Caco-2 (cell line): ENCODE measurements at regions of chr17 and their contacts with region 1.

Region 1: DNA sequence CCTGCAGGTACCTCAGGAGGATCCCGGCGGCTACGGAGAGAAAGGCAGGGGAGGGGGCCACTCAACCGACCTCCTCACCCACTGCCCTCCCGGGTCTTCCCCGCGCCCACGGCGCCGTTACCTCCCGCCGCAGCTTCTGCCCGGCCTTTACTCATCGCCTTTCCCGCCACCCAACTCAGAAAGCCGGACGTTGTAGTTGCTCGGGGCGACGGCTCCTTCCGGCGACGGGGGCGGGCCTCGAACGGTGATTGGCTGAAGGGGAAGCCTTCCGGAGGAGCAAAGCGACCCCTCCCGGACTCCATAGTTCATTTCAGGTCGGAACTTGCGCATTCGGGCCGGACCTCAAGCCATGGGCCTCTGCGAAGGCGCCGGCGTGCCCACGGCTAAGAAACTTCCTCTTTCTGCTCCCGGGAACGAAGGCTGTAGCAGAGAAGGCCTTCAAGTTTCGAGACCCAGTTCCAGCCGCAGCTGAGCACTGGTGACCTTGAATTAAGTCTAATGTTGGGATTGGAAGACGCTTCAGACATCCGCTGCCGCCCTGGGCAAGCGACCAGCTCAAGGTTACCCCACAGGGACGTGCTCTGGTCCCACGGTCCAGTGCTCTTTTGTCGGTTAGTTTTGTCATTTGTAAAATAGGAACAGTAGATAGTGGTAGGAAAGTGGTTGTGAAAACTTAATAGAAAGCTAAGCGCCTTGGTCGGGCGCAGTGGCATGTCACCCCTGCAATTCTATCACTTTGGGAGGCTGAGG is at the start of gene PSMC3IP:
- DNase-seq: peak; percentile 95 to 97
- H3K4me3 ChIP-seq: peak within 1 kb of the TSS; percentile 82
- H3K4me3 Mint-ChIP-seq: peak within 1 kb of the TSS; percentile 80
- H3K27ac Mint-ChIP-seq: peak within 1 kb of the TSS; percentile 84
- H3K4me1 ChIP-seq: peaks cover 4% of the 10 kb centered on the region
- H3K4me1 Mint-ChIP-seq: peaks cover 23% of the 10 kb centered on the region
- H3K27me3 ChIP-seq: no peaks in the 10 kb centered on the region
- H3K27me3 Mint-ChIP-seq: no peaks in the 10 kb centered on the region
- CTCF ChIP-seq: peak; percentile 59 to 64
- total RNA-seq, gene PSMC3IP: 24.7 and 25.2 TPM in 2 replicates

Region 2: GRCh38 chr17:42536048-42536371 is 41.7 kb before region 1 on chr17 and contains the start of gene NAGLU:
- CTCF ChIA-PET with region 1: interaction called, 12 read pairs
- POLR2A ChIA-PET with region 1: interaction called, 10 read pairs
- intact Hi-C with region 1: loop called (anchors 5 kb)
- DNase-seq: peak; percentile 93 to 96
- H3K4me3 ChIP-seq: peak within 1 kb of the TSS; percentile 50
- H3K4me3 Mint-ChIP-seq: peak within 1 kb of the TSS; percentile 72
- H3K27ac Mint-ChIP-seq: peak within 1 kb of the TSS; percentile 24
- H3K4me1 ChIP-seq: peaks cover 28% of the 10 kb centered on the region
- H3K4me1 Mint-ChIP-seq: peaks cover 34% of the 10 kb centered on the region
- H3K27me3 ChIP-seq: no peaks in the 10 kb centered on the region
- H3K27me3 Mint-ChIP-seq: no peaks in the 10 kb centered on the region
- CTCF ChIP-seq: no peak
- total RNA-seq, gene NAGLU: 28.7 and 29.2 TPM in 2 replicates

Region 3: GRCh38 chr17:42566883-42567573 is 10.7 kb before region 1 on chr17 and contains the start of gene MLX:
- CTCF ChIA-PET with region 1: interaction called, 17 read pairs
- POLR2A ChIA-PET with region 1: no interaction called
- intact Hi-C with region 1: loop called (anchors 1 kb)
- DNase-seq: peak; percentile 92 to 96
- H3K4me3 ChIP-seq: peak within 1 kb of the TSS; percentile 49
- H3K4me3 Mint-ChIP-seq: peak within 1 kb of the TSS; percentile 95
- H3K27ac Mint-ChIP-seq: peak within 1 kb of the TSS; percentile 95
- H3K4me1 ChIP-seq: peaks cover 13% of the 10 kb centered on the region
- H3K4me1 Mint-ChIP-seq: peaks cover 15% of the 10 kb centered on the region
- H3K27me3 ChIP-seq: no peaks in the 10 kb centered on the region
- H3K27me3 Mint-ChIP-seq: no peaks in the 10 kb centered on the region
- CTCF ChIP-seq: peak in 1 of 2 experiments; percentile 22
- total RNA-seq, gene MLX: 37.5 and 41.2 TPM in 2 replicates

Region 4: GRCh38 chr17:42618442-42619150 is 40.9 kb after region 1 on chr17:
- CTCF ChIA-PET with region 1: interaction called, 10 read pairs
- POLR2A ChIA-PET with region 1: no interaction called
- intact Hi-C with region 1: no loop called
- DNase-seq: peak; percentile 79
- H3K4me3 ChIP-seq: no peak overlapping the region
- H3K4me3 Mint-ChIP-seq: no peak overlapping the region
- H3K27ac Mint-ChIP-seq: peak overlapping the region; percentile 30
- H3K4me1 ChIP-seq: 0 out of 2 replicates have a peak, but pooled peaks cover 8% of the 10 kb centered on the region
- H3K4me1 Mint-ChIP-seq: peaks cover 10% of the 10 kb centered on the region
- H3K27me3 ChIP-seq: no peaks in the 10 kb centered on the region
- H3K27me3 Mint-ChIP-seq: no peaks in the 10 kb centered on the region
- CTCF ChIP-seq: peak; percentile 38 to 90